AG04449 (cell line): ENCODE measurements at regions of chr4 and their contacts with region 1.

Region 1: GRCh38 chr4:38179690-38180377 is 219.6 kb downstream of the PTTG2 start:
- DNase-seq: no peak
- H3K4me3 ChIP-seq: no peak overlapping the region
- CTCF ChIP-seq: peak; percentile 75

Region 2: DNA sequence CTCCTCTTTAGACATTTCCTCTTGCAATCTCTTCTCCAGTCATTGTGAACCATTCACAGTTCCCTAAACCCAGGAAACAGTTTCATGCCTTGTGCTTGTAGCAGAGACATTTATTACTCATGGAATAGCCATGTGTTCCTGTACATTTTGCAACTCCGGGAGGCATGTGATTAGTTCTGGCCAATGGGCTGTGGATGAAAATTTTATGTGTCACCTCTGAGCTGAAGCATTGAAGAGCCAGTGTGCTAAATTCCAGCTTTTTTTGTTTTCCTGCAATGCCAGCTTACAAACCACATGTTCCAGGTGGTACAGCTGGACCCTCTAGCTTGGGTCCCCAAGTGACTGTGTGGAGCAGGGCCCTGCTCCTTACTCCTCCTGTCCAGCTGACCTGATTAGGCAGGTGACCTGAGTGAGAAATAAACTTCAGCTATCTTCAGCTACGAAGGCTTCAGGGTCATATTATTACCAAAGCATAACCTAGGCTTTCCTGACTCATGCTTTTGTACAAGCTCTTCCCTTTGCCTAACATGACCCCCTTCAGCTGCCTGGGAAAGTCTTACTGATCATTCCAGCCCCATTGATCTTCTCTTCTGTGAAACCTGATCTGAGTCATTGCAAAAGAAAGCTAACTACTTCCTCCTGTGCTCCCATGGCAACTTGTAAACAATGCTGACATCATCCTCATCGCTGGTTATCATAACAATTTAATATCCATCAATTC is 19.2 kb before region 1 on chr4:
- CTCF ChIA-PET with region 1: interaction called, 21 read pairs
- POLR2A ChIA-PET with region 1: interaction called, 3 read pairs
- DNase-seq: peak; percentile 95
- H3K4me3 ChIP-seq: no peak overlapping the region
- CTCF ChIP-seq: no peak

Region 3: GRCh38 chr4:38310446-38311043 is 130.7 kb after region 1 on chr4:
- CTCF ChIA-PET with region 1: interaction called, 21 read pairs
- POLR2A ChIA-PET with region 1: no interaction called
- DNase-seq: no peak
- H3K4me3 ChIP-seq: no peak overlapping the region
- CTCF ChIP-seq: no peak

Region 4: GRCh38 chr4:38675146-38676121 is 495.6 kb after region 1 on chr4:
- CTCF ChIA-PET with region 1: interaction called, 65 read pairs
- POLR2A ChIA-PET with region 1: no interaction called
- DNase-seq: peak; percentile 34
- H3K4me3 ChIP-seq: no peak overlapping the region
- CTCF ChIP-seq: peak; percentile 75

Region 5: DNA sequence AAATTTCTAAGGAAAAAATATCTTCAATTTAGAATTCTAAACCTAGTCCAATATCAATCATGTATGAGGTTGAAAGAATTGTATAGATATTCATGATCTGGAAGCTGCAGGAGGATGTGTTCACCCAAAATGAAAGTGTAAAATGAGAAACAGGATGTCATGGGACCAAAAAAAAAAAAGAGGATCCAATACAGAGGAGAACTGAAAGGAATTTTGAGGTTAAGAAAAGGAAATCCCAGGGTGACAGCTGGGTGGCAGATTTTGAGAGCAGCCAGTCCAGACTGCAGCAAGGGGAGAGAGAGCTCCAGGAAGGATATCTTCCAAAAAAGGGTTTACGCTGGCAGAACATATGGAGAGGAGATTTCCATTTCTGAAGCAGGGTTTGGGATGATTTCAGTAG is 564.0 kb after region 1 on chr4:
- CTCF ChIA-PET with region 1: interaction called, 15 read pairs
- POLR2A ChIA-PET with region 1: no interaction called
- DNase-seq: no peak
- H3K4me3 ChIP-seq: no peak overlapping the region
- CTCF ChIP-seq: no peak

Region 6: DNA sequence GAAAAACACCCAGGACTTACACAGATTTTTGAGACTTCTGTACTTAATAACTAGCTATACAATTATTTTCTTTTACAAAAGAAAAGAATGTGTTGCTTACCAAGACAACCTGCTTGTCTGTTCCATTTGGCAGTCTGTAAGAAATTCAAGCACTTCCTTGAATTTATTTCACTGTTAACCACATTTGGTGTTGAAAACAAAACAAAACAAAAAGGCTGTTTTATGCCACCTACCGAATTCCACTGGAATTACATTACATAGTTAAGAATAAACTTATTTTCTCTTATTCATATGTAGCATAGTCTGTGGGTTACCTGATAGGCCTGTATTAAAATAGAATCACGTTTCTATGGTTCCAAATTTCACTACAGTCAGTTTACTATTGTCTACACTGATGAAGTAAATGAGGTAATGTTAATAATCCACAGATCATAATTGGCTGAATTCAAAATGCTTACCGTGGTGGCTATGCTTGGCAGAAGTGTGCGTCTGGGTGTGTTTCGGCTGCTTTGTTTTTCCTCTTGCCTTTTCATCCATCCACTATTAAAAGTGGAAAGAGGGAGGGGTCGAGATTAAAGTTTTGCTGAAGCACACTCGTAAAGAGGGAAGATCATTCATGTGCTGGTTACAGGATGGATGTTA is 624.9 kb after region 1 on chr4 and contains the start of gene TLR1:
- CTCF ChIA-PET with region 1: interaction called, 10 read pairs
- POLR2A ChIA-PET with region 1: no interaction called
- DNase-seq: peak; percentile 40
- H3K4me3 ChIP-seq: no peak within 1 kb of the TSS
- CTCF ChIP-seq: no peak